Activated B cell treated with CpG ODN at 0.5 μM for 24 hours (primary cell): ENCODE measurements at regions of chr12 and their contacts with region 1.

Region 1: GRCh38 chr12:83739607-83740006 is 1052.9 kb downstream of the TMTC2 start:
- DNase-seq: no peak
- ATAC-seq: no peak
- H3K4me3 Mint-ChIP-seq: no peak overlapping the region
- H3K27ac Mint-ChIP-seq: no peak overlapping the region
- H3K4me1 Mint-ChIP-seq: no peaks in the 10 kb centered on the region
- H3K27me3 Mint-ChIP-seq: no peaks in the 10 kb centered on the region
- CTCF ChIP-seq: no peak

Region 2: DNA sequence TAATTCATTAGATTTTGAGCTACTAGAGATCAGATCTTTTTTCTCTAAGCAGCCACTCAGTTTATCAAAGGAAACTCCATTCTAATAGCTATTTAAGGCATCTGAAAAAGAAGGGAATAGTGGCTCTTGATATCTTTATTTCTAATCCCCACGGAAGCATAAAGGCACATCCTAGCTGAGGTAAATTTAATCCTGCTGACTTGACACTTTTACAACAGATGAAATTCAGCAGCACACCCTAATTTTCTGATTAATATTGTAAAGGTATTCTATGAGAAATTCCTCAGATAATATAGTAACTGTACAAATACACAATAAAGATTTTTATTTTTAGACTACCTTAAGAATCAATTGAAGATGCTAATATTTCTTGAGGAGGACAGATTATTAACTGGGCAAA is 136.5 kb before region 1 on chr12:
- CTCF ChIA-PET with region 1: no interaction called
- POLR2A ChIA-PET with region 1: no interaction called
- intact Hi-C with region 1: no loop called
- DNase-seq: no peak
- ATAC-seq: no peak
- H3K4me3 Mint-ChIP-seq: no peak overlapping the region
- H3K27ac Mint-ChIP-seq: no peak overlapping the region
- H3K4me1 Mint-ChIP-seq: no peaks in the 10 kb centered on the region
- H3K27me3 Mint-ChIP-seq: no peaks in the 10 kb centered on the region
- CTCF ChIP-seq: no peak

Region 3: DNA sequence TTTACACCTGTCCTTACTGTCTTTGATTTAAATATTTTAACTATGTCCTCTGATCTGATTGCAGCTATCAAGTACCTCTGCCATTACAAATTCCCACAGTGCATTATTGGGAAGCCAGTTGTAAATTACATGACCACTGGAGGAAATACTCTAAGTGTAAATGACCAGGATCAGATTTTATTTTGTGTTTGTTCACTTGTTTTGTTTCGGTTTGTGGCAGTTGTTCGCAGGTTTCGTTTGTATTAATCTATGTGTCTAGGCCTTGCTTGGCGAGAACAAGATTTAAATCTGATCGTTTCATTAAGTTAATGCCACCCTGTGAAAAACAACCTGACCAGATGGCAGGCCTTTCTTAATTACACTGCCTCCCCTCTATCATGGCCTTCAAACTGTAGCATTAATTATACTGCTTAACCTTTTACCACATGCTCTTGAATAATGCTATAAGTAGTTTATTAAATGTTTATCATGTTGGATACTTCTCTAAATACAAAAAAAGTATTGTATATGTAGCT is 62.8 kb before region 1 on chr12:
- CTCF ChIA-PET with region 1: no interaction called
- POLR2A ChIA-PET with region 1: no interaction called
- intact Hi-C with region 1: loop called (anchors 2 kb)
- DNase-seq: no peak
- ATAC-seq: no peak
- H3K4me3 Mint-ChIP-seq: no peak overlapping the region
- H3K27ac Mint-ChIP-seq: no peak overlapping the region
- H3K4me1 Mint-ChIP-seq: no peaks in the 10 kb centered on the region
- H3K27me3 Mint-ChIP-seq: no peaks in the 10 kb centered on the region
- CTCF ChIP-seq: no peak

Region 4: DNA sequence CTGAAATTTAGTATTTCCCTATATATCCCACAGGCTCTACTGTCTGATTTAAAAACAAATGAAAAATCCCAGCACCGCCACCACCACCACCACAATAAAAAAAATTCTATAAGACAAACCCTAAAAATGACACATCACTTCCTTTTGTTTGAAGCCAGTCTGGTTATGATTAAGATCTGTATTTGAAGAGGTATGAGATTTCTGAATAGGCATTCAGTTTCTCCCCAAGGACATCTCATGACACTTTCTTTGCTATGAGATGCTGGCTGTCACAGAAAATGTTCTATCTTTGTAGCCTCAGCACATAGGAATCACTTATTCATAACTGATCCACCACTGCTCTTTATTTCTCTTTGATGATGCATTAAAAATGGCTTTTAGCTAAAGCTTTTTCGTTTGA is 102.0 kb after region 1 on chr12:
- CTCF ChIA-PET with region 1: no interaction called
- POLR2A ChIA-PET with region 1: no interaction called
- intact Hi-C with region 1: no loop called
- DNase-seq: no peak
- ATAC-seq: no peak
- H3K4me3 Mint-ChIP-seq: no peak overlapping the region
- H3K27ac Mint-ChIP-seq: no peak overlapping the region
- H3K4me1 Mint-ChIP-seq: no peaks in the 10 kb centered on the region
- H3K27me3 Mint-ChIP-seq: no peaks in the 10 kb centered on the region
- CTCF ChIP-seq: no peak